ENCODE measurements at regions of chr16 and their contacts with region 1.

Region 1: DNA sequence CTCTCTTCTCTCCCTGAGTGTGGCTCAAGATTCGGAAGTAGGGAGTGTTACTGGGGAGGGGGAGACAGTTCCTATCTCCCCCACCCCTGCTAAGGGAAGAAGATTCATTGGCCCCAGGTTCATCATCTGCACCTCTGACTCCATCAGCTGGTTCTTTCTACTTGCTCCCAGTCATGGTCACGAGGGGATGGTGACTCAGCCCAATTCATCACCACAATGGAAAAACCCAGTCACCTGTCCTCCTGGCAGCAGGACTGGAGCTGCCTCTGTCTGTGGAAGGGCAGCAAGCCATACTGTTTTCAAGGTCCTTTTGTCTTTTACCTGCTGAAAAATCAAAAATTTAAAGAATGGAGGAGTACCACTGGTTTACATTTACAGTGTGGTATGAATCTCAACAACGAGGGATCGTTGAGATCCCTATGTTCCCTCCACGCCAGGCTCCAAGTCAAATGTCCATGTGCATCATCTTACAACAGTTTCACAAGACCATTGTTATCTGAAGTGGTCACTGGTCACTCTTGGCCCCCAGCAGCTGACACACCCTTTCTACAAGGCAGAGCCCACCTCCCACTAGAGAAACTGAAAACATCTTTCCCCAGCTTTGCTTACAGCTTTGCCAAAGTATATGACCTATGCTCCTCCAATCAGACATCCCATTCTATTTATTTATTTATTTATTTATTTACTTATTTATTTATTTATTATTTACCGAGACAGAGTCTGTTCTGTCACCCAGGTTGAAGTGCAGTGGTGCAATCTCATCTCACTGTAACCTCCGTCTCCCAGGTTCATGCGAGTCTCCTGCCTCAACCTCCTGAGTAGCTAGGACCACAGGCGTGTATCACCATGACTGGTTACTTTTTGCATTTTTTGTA is 40.4 kb upstream of the NDRG4 start:
- DNase-seq: no peak
- ATAC-seq: no peak

Region 2: GRCh38 chr16:58409316-58409973 is 50.1 kb before region 1 on chr16:
- intact Hi-C with region 1: no loop called
- DNase-seq: peak; percentile 65
- ATAC-seq: peak; percentile 78

Region 3: DNA sequence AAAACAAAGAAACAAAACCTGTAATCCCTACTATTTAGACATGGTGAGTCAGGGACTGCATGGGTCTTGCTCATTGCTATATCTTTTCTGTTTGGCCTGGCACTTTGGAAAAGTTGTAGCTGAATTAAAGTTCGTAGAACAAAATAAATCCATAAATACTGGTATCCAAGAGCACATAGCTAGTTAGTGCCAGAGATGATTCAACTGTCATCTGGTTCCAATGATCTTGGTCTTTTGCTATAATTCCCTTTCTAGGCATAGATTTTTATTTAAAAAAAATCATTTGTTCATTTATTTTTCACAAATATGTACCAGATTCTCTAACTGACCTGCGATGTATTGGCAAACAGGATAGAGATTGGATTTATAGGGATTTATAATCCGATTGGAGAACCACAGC is 1710.6 kb after region 1 on chr16:
- intact Hi-C with region 1: loop called (anchors 5 kb)
- DNase-seq: no peak
- ATAC-seq: no peak